Mammary epithelial cell (primary cell): ENCODE measurements at regions of chr12 and their contacts with region 1.

Region 1: DNA sequence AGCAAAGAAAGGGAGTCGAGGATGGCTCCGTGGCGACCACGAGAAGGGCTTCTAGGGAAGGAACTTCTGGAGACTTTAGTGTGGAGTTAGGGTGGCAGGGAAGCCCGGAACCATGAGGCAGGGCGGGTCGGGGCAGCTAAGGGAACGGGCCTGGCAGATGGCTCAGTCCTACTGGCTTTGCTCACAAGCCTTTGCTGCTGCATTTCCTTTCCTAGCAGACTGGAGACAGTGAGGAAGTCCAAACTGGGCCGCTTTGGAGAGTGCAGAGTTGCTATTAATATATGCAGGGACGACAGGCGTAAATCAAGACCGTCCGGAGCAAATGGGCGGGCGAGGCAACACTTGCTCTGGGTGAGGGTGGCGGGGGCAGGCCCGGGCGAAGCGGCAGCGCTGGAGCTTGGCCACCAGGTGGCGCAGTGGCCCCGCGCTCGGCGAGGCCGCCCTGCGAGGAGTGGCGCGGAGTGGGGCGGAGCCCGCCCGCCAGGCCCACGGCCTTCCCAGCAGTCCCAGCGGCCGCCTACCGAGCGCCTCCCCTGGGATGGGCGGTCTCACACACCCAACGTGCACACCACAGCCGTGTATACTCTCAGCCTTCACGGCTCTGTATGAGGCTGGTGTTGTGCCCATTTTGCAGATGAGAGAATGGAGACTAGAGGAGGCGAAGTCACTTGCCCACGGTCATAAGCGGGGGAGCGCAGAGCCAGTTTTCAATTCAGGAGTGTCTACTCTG is 24.4 kb upstream of the LRTM2 start:
- DNase-seq: peak; percentile 77
- H3K4me3 ChIP-seq: peak overlapping the region; percentile 9 to 39 (median 36)
- H3K27ac ChIP-seq: no peak overlapping the region
- H3K4me1 ChIP-seq: peaks cover 14% of the 10 kb centered on the region
- H3K27me3 ChIP-seq: no peaks in the 10 kb centered on the region
- CTCF ChIP-seq: peak; percentile 64 to 78

Region 2: DNA sequence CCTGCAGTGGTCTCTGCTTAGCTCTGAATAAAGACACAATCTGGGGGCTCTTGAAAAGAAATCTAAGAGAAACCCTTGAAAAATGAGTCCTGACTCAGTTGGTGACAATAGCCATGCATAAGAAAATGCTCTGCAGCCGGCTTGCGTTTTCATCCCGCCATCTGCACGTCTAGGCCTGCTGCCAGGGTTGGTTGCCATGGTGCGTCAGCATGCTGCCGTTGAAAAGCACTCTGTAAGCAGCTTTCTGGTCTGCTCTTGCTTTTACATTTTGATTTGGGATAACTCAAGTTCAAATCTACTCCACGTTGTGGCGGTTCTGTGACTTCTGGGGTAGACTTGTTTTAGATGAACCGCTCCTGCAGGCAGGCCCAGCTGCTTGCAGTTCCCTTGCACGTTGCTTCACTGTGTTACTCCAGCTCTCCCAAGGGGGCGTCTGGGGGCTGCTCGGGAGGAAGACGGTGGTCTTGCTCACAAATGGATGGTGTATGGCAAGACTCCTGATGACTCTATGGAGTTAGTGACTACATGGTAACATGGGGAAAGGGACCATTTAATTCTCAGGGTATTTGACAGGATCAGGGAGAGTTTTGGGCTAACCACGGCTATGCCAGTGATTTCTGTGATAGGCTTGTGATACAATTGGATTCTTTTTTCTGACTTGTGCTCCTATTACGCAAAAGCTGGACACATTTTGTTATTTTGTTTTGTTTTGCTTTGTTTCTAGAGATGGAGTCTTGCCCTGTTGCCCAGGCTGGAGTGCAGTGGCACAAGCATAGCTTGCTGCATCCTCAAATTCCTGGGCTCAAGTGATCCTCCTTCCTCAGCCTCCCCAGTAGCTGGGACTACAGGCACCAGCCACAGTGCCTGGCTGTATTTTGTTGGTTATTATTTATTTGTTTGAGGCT is 151.2 kb before region 1 on chr12:
- CTCF ChIA-PET with region 1: no interaction called
- dilution Hi-C with region 1: no loop called
- in situ Hi-C with region 1: loop called in 1 of 2 experiments (anchors 5 kb)
- intact Hi-C with region 1: no loop called
- DNase-seq: peak; percentile 46
- H3K4me3 ChIP-seq: no peak overlapping the region
- H3K27ac ChIP-seq: no peak overlapping the region
- H3K4me1 ChIP-seq: peaks cover 8% of the 10 kb centered on the region
- H3K27me3 ChIP-seq: no peaks in the 10 kb centered on the region
- CTCF ChIP-seq: no peak

Region 3: DNA sequence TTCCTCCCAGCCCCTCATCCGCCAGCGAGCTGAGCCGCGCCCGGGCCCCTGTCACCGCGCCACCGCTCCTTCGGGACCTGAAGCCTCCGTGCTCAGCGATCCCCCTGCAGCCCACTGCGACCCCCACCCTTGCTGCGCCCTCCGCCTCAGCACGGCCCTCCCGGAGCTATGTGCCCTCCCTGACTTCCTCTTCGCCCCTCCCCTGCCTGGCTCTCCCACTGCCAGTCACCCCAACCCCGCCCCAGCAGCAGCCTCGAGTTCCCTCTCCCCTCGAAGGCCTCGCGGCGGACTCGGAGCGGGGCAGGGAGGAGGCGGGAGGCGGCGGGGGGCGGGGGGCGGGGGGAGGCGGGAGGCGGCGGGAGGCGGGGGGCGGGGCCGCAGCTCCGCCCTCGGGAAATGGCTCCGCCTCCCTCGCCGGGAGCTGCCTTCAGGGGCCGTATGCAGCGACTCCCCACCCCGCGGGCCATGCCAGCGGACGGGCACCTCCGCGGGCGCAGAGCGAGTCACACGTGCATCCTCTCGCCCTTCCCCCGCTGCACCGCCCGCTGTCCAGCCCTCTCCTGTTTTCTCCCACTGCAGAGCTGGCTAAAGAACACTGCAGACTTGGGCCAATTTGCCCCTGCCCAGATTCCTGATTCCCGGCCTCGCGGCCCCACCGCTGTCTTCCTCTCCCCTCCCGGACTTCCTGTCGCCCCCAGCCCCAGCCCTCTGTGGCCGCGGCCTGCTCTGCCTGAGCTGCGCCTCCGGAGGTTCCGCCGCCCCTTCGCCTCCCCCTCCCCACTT is 134.2 kb before region 1 on chr12:
- CTCF ChIA-PET with region 1: no interaction called
- dilution Hi-C with region 1: loop called (anchors 25 kb)
- in situ Hi-C with region 1: no loop called
- intact Hi-C with region 1: no loop called
- DNase-seq: peak; percentile 80
- H3K4me3 ChIP-seq: peak overlapping the region in 2 of 3 experiments; percentile 34 to 53
- H3K27ac ChIP-seq: peak overlapping the region; percentile 29
- H3K4me1 ChIP-seq: peaks cover 22% of the 10 kb centered on the region
- H3K27me3 ChIP-seq: no peaks in the 10 kb centered on the region
- CTCF ChIP-seq: no peak

Region 4: GRCh38 chr12:1830981-1831963 is 35.3 kb after region 1 on chr12:
- CTCF ChIA-PET with region 1: no interaction called
- dilution Hi-C with region 1: no loop called
- in situ Hi-C with region 1: no loop called
- intact Hi-C with region 1: loop called (anchors 1 kb)
- DNase-seq: peak; percentile 57
- H3K4me3 ChIP-seq: no peak overlapping the region
- H3K27ac ChIP-seq: no peak overlapping the region
- H3K4me1 ChIP-seq: no peaks in the 10 kb centered on the region
- H3K27me3 ChIP-seq: peaks cover 2% of the 10 kb centered on the region
- CTCF ChIP-seq: no peak

Region 5: DNA sequence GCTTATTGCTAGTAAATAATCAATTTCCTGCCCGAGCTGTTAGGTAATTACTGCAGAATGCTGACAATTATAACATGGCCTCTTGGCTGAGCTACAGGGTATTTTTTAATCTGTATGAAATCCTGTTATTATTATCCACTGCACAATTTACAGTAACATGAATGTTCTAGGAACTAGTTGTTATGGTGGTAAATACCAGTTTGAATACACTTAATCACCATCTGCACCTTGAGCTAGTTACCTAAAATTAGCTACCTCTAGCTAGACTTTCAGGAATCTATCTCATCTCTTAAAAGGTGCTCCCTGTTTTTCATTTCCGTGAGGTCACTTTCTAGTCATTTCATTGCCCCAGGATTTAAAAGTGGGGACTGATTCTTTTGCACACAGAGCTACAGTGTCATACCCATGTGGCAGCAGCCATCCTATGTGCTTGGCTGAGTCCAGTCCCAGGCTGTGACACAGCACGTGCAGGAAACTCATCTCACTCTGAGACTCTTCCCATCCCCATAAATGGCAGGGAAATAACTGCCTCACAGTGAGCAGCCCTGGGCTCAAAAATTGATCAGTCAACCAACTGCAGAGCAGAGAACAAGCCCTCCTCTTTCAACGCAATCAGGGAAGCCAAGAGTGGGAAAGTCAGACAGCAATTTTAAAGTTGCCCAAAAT is 170.7 kb after region 1 on chr12:
- CTCF ChIA-PET with region 1: no interaction called
- dilution Hi-C with region 1: no loop called
- in situ Hi-C with region 1: no loop called
- intact Hi-C with region 1: no loop called
- DNase-seq: no peak
- H3K4me3 ChIP-seq: no peak overlapping the region
- H3K27ac ChIP-seq: no peak overlapping the region
- H3K4me1 ChIP-seq: no peaks in the 10 kb centered on the region
- H3K27me3 ChIP-seq: no peaks in the 10 kb centered on the region
- CTCF ChIP-seq: no peak

Region 6: GRCh38 chr12:2034633-2035430 is 238.9 kb after region 1 on chr12:
- CTCF ChIA-PET with region 1: interaction called, 4 read pairs
- dilution Hi-C with region 1: no loop called
- in situ Hi-C with region 1: loop called in 1 of 2 experiments (anchors 10 kb)
- intact Hi-C with region 1: loop called (anchors 1 kb)
- DNase-seq: peak; percentile 68
- H3K4me3 ChIP-seq: peak overlapping the region; percentile 9 to 19 (median 16)
- H3K27ac ChIP-seq: no peak overlapping the region
- H3K4me1 ChIP-seq: peaks cover 8% of the 10 kb centered on the region
- H3K27me3 ChIP-seq: peaks cover 5% of the 10 kb centered on the region
- CTCF ChIP-seq: peak; percentile 69 to 85